Left colon (tissue), 2 donors: ENCODE measurements at regions of chr19 and their contacts with region 1.

Region 1: DNA sequence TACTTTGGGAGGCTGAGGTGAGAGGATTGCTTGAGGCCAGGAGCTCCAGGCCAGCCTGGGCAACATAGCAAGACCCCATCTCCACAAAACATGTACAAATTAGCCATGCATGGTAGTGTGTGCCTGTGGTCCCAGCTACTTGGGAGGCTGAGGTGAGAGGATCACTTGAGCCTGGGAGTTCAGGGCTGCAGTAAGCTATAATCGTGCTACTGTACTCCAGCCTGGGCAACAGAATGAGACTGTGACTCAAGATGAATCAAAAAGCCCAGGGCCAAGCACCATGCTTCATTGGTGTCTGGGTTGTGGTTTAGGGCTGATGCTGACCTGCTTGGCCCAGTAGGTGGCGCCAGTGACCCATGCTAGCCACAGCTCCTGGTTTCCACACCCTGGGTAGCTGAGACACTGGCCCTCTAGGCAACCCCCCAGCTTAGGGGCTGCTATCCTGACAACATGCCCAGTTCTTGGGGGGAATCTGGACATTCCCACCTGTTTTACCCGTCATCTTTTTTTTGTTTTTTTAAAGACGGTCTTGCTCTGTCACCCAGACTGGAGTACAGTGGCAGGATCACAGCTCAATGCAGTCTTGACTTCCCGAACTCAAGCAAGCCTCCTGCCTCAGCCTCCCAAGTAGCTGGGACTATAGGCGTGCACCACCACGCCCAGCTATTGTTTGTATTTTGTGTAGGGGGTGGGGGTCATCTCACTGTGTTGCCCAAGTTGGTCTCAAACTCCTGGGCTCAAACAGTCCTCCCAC is 5.5 kb downstream of the CCDC124 start:
- DNase-seq: peak; percentile 49 to 87
- ATAC-seq: peak; percentile 84

Region 2: DNA sequence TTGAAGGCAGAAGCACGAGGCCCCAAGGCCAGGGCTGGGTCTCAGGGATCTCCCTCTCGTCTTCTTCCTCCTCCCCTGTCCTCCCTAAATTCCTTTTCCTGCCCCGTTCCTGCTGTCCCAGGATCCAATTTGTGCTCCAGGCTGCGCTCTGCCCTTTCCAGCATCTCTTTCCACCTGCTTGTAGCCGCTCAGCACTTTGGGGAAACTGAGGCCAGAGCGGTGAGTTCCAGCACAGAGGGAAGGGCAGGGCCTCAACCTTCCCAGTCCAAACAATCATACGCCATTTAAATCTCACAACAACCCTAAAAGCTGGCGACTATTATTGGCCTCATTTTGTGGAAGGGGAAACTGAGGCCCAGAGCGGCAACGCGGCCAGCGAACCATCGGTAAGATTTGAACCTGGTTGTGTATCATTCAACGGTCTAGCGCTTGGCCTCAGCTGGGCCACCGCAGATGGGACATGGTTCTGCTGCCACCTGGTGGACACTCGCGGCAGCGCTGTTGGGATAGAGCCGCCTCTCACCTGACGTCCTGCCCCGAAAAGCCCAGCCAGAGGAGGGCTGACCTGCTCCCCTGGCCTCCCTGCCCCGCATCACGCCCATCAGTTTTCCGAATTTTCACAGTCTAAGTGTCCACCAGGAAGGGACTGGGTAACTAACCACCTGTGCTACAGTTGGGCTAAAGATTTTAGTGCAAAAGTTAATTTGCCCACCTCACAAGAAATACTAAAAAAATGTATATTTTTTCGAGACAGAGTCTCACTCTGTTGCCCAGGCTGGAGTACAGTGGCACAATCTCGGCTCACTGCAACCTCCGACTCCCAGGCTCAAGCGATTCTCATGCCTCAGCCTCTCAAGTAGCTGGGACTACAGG is 82.8 kb before region 1 on chr19:
- intact Hi-C with region 1: no loop called
- DNase-seq: peak; percentile 68 to 92
- ATAC-seq: peak; percentile 34

Region 3: DNA sequence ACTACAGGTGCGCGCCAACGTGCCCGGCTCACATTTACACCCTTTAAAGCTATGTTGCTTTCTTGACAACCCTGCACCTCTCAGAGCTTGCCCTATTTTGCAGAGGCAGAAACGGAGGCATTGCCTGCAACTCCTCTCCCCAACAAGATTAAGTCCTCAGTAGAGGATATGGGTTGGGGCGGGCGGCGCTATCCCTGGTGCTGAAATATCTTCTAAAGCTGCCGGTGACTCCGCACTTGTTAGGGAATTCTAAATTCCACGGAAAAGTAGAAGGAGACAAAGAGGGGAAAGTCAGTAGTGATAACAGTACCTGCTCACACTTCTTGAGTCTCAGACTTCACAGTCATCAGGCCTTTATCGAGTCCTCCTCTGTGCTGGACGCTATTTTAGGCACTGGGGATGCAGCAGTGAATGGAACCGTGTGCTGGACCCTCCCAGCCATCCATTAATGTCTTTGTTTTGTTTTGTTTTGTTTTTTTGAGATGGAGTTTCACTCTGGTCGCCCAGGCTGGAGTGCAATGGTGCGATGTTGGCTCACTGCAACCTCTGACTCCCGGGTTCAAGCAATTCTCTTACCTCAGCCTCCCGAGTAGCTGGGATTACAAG is 48.6 kb before region 1 on chr19:
- intact Hi-C with region 1: no loop called
- DNase-seq: no peak
- ATAC-seq: no peak

Region 4: GRCh38 chr19:17996826-17997316 is 58.6 kb after region 1 on chr19:
- intact Hi-C with region 1: loop called (anchors 2 to 5 kb)
- DNase-seq: peak; percentile 69 to 87
- ATAC-seq: peak; percentile 48